Activated CD4-positive, alpha-beta memory T cell treated with anti-CD3 and anti-CD28 coated beads for 36 hours (primary cell): ENCODE measurements at regions of chr19 and their contacts with region 1.

Region 1: GRCh38 chr19:41449079-41449864 is 6.3 kb downstream of the ERICH4 start:
- DNase-seq: peak; percentile 84
- H3K4me3 Mint-ChIP-seq: peak overlapping the region; percentile 62
- H3K27ac Mint-ChIP-seq: no peak overlapping the region
- H3K4me1 Mint-ChIP-seq: peaks cover 7% of the 10 kb centered on the region
- H3K27me3 Mint-ChIP-seq: peaks cover 9% of the 10 kb centered on the region

Region 2: GRCh38 chr19:41263850-41264580 is 185.3 kb before region 1 on chr19 and contains the start of gene HNRNPUL1:
- CTCF ChIA-PET with region 1: no interaction called
- POLR2A ChIA-PET with region 1: no interaction called
- intact Hi-C with region 1: no loop called
- DNase-seq: peak; percentile 99
- H3K4me3 Mint-ChIP-seq: peak within 1 kb of the TSS; percentile 97
- H3K27ac Mint-ChIP-seq: peak within 1 kb of the TSS; percentile 100
- H3K4me1 Mint-ChIP-seq: peaks cover 46% of the 10 kb centered on the region
- H3K27me3 Mint-ChIP-seq: peaks cover 4% of the 10 kb centered on the region
- total RNA-seq, gene HNRNPUL1: 290 to 295 TPM

Region 3: DNA sequence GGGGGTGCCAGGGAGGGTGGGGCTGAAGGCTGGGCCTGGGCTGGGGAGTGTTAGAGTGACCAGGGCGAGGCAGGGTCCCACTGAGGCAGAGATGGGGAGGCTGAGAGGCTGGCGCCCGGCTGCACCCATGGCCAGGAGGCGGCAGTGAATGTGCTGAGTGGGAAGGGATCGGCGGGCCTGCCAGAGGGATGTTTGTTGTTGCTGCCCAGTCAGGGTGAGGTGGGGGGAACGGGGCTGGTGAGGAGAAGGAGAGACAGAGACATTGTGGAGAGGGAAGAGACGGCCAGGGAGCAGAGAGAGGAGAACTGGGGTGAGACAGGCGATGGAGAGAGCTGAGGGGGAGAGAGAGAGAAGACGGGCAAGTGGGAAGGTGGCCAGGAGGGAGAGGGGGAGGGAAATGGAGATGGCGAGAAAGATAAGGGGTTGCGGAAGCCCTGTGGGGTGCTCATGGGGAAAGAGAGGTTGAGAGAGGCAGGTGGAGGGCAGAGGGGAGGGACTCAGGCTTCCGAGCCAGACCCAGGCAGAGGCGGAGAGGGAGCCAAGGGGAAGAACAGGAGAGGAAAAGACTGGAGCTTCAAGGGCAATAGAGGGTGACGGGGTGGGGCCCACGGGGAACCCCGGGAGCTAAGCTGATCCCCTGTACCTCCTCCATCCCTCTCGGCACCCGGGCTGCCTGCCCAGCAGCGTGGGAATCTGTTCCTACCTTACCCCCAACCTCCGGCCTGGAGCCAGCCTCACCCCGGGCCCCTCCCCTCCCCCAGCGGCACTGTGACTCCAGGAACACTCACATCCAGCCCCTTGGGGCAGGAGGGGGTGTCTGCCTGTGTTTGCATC is 21.4 kb before region 1 on chr19:
- CTCF ChIA-PET with region 1: interaction called, 16 read pairs
- POLR2A ChIA-PET with region 1: interaction called, 7 read pairs
- intact Hi-C with region 1: no loop called
- DNase-seq: peak; percentile 56
- H3K4me3 Mint-ChIP-seq: peak overlapping the region; percentile 67
- H3K27ac Mint-ChIP-seq: peak overlapping the region; percentile 85
- H3K4me1 Mint-ChIP-seq: peaks cover 21% of the 10 kb centered on the region
- H3K27me3 Mint-ChIP-seq: no peaks in the 10 kb centered on the region

Region 4: GRCh38 chr19:41531438-41532311 is 82.4 kb after region 1 on chr19:
- CTCF ChIA-PET with region 1: interaction called, 104 read pairs
- POLR2A ChIA-PET with region 1: no interaction called
- intact Hi-C with region 1: no loop called
- DNase-seq: peak; percentile 92
- H3K4me3 Mint-ChIP-seq: peak overlapping the region; percentile 74
- H3K27ac Mint-ChIP-seq: peak overlapping the region; percentile 69
- H3K4me1 Mint-ChIP-seq: peaks cover 72% of the 10 kb centered on the region
- H3K27me3 Mint-ChIP-seq: peaks cover 4% of the 10 kb centered on the region

Region 5: GRCh38 chr19:41554907-41555306 is 105.6 kb after region 1 on chr19:
- CTCF ChIA-PET with region 1: interaction called, 281 read pairs
- POLR2A ChIA-PET with region 1: no interaction called
- intact Hi-C with region 1: no loop called
- DNase-seq: no peak
- H3K4me3 Mint-ChIP-seq: peak overlapping the region; percentile 11
- H3K27ac Mint-ChIP-seq: peak overlapping the region; percentile 96
- H3K4me1 Mint-ChIP-seq: peaks cover 70% of the 10 kb centered on the region
- H3K27me3 Mint-ChIP-seq: no peaks in the 10 kb centered on the region

Region 6: GRCh38 chr19:41575998-41576397 is 126.7 kb after region 1 on chr19 and contains the start of gene CEACAM21:
- CTCF ChIA-PET with region 1: interaction called, 281 read pairs
- POLR2A ChIA-PET with region 1: no interaction called
- intact Hi-C with region 1: no loop called
- DNase-seq: peak; percentile 76
- H3K4me3 Mint-ChIP-seq: peak within 1 kb of the TSS; percentile 73
- H3K27ac Mint-ChIP-seq: peak within 1 kb of the TSS; percentile 78
- H3K4me1 Mint-ChIP-seq: peaks cover 29% of the 10 kb centered on the region
- H3K27me3 Mint-ChIP-seq: no peaks in the 10 kb centered on the region
- total RNA-seq, gene CEACAM21: 40.8 to 40.9 TPM

Region 7: GRCh38 chr19:41588497-41589209 is 139.4 kb after region 1 on chr19:
- CTCF ChIA-PET with region 1: interaction called, 92 read pairs
- POLR2A ChIA-PET with region 1: no interaction called
- intact Hi-C with region 1: no loop called
- DNase-seq: peak; percentile 42
- H3K4me3 Mint-ChIP-seq: no peak overlapping the region
- H3K27ac Mint-ChIP-seq: no peak overlapping the region
- H3K4me1 Mint-ChIP-seq: no peaks in the 10 kb centered on the region
- H3K27me3 Mint-ChIP-seq: peaks cover 4% of the 10 kb centered on the region